ENCODE measurements at regions of chr14 and their contacts with region 1.

Region 1: DNA sequence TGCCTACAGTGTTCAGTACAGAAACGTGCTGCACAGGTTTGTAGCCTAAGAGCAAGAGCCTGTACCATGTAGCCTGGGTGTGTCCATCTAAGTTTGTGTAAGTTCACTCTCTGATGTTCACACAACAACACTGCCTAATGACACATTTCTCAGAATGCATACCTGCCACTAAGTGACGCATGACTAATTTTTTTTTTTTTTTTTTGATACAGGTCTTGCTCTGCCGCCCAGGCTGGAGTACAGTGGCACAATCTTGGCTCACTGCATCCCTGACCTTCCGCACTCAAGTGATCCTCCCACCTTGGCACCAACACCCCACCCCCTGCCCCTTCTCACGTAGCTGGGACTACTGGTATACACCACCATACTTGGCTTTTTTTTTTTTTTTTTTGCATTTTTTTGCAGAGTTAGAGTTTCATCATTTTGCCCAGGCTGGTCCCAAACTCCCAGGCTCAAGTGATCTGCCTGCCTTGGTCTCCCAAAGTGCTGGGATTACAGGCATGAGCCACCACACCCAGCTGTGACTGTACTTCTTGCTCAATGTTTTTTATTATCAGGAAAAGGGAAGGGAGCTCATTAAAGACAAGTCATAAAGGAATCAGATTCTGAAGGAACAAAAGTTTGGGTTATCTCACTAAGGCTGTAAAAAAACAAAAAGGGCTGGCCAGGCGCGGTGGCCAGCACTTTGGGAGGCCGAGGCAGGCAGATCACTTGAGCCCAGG is 10.0 kb upstream of the CDC42BPB start:
- DNase-seq: peak; percentile 92 to 100
- H3K4me3 ChIP-seq: peak overlapping the region; percentile 20; the same call in 1 of the 2 replicates
- H3K27ac ChIP-seq: peak overlapping the region; percentile 94
- H3K4me1 ChIP-seq: peaks cover 60% of the 10 kb centered on the region
- H3K27me3 ChIP-seq: no peaks in the 10 kb centered on the region
- CTCF ChIP-seq: no peak

Region 2: GRCh38 chr14:101997429-101998336 is 1069.7 kb before region 1 on chr14:
- CTCF ChIA-PET with region 1: no interaction called
- POLR2A ChIA-PET with region 1: interaction called, 21 read pairs
- intact Hi-C with region 1: no loop called
- DNase-seq: no peak
- H3K4me3 ChIP-seq: no peak overlapping the region
- H3K27ac ChIP-seq: no peak overlapping the region
- H3K4me1 ChIP-seq: no peaks in the 10 kb centered on the region
- H3K27me3 ChIP-seq: no peaks in the 10 kb centered on the region
- CTCF ChIP-seq: no peak

Region 3: GRCh38 chr14:102606296-102606695 is 461.1 kb before region 1 on chr14:
- CTCF ChIA-PET with region 1: interaction called, 14 read pairs
- POLR2A ChIA-PET with region 1: no interaction called
- intact Hi-C with region 1: no loop called
- DNase-seq: no peak
- H3K4me3 ChIP-seq: no peak overlapping the region
- H3K27ac ChIP-seq: no peak overlapping the region
- H3K4me1 ChIP-seq: peaks cover 29% of the 10 kb centered on the region
- H3K27me3 ChIP-seq: no peaks in the 10 kb centered on the region
- CTCF ChIP-seq: no peak

Region 4: GRCh38 chr14:103014466-103015319 is 52.7 kb before region 1 on chr14:
- CTCF ChIA-PET with region 1: interaction called, 4 read pairs
- POLR2A ChIA-PET with region 1: no interaction called
- intact Hi-C with region 1: loop called (anchors 1 kb)
- DNase-seq: peak in 1 of 2 experiments; percentile 69
- H3K4me3 ChIP-seq: peak overlapping the region; percentile 2; the same call in 1 of the 2 replicates
- H3K27ac ChIP-seq: peak overlapping the region; percentile 58
- H3K4me1 ChIP-seq: peaks cover 70% of the 10 kb centered on the region
- H3K27me3 ChIP-seq: no peaks in the 10 kb centered on the region
- CTCF ChIP-seq: no peak

Region 5: GRCh38 chr14:103141119-103141796 is 73.9 kb after region 1 on chr14:
- CTCF ChIA-PET with region 1: interaction called, 7 read pairs
- POLR2A ChIA-PET with region 1: interaction called, 24 read pairs
- intact Hi-C with region 1: no loop called
- DNase-seq: peak; percentile 78 to 84
- H3K4me3 ChIP-seq: no peak overlapping the region
- H3K27ac ChIP-seq: 0 out of 2 replicates have a peak overlapping the region, but pooled peaks have one; percentile 30
- H3K4me1 ChIP-seq: peaks cover 59% of the 10 kb centered on the region
- H3K27me3 ChIP-seq: no peaks in the 10 kb centered on the region
- CTCF ChIP-seq: peak; percentile 99

Measured in PC-9 (cell line).